ENCODE measurements at regions of chr1 and their contacts with region 1.

Region 1: GRCh38 chr1:23585447-23586015 is 26.2 kb upstream of the ID3 start:
- DNase-seq: no peak
- ATAC-seq: no peak
- H3K4me3 ChIP-seq: no peak overlapping the region
- H3K27ac ChIP-seq: no peak overlapping the region
- H3K4me1 ChIP-seq: 0 out of 2 replicates have a peak, but pooled peaks cover 2% of the 10 kb centered on the region
- H3K27me3 ChIP-seq: no peaks in the 10 kb centered on the region
- CTCF ChIP-seq: no peak

Region 2: DNA sequence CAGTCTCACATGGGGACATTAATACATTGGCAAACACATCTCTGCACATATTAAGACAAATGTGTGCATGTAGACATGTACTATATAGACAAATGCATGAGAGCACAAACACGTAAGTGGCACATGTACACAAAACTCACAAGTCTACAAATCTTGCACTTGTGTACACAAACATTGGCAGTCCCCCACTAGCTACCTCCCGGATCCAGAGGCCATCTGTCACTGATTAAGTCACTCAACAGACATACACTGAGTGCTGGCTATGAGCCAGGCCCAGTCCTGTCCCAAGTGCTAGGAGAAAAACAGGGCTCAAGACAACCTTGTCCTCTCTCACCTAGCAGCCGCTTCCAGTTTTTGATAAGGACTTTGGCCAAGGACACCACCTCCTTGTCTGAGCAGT is 168.0 kb before region 1 on chr1:
- CTCF ChIA-PET with region 1: no interaction called
- POLR2A ChIA-PET with region 1: no interaction called
- in situ Hi-C with region 1: no loop called
- intact Hi-C with region 1: no loop called
- DNase-seq: no peak
- ATAC-seq: no peak
- H3K4me3 ChIP-seq: no peak overlapping the region
- H3K27ac ChIP-seq: no peak overlapping the region
- H3K4me1 ChIP-seq: peaks cover 4% of the 10 kb centered on the region; the same call in 1 of the 2 replicates
- H3K27me3 ChIP-seq: no peaks in the 10 kb centered on the region
- CTCF ChIP-seq: no peak

Region 3: DNA sequence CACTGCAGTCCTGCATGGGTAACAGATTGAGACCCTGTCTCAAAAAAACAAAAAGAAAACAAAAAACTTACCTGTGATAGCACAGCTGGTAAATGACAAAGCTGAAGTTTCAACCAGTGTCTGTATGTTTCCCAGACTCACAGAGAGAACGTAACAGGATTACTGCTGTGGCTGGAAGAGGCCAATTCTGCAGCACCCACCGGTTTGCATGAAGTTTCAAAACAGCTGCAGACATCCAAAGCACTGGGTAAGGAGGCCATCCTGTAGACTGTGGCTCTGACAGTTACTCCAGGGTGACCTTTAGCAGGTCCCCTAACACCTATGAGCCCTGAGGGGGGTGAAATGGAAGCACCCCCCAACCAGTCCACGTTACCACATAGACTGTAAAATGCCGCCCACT is 33.7 kb before region 1 on chr1:
- CTCF ChIA-PET with region 1: no interaction called
- POLR2A ChIA-PET with region 1: no interaction called
- in situ Hi-C with region 1: no loop called
- intact Hi-C with region 1: no loop called
- DNase-seq: no peak
- ATAC-seq: no peak
- H3K4me3 ChIP-seq: no peak overlapping the region
- H3K27ac ChIP-seq: peak overlapping the region; percentile 25; the same call in 1 of the 2 replicates
- H3K4me1 ChIP-seq: peaks cover 28% of the 10 kb centered on the region
- H3K27me3 ChIP-seq: no peaks in the 10 kb centered on the region
- CTCF ChIP-seq: no peak

Region 4: GRCh38 chr1:23562137-23562876 is 23.2 kb before region 1 on chr1:
- CTCF ChIA-PET with region 1: interaction called, 10 read pairs
- POLR2A ChIA-PET with region 1: no interaction called
- in situ Hi-C with region 1: no loop called
- intact Hi-C with region 1: no loop called
- DNase-seq: no peak
- ATAC-seq: peak; percentile 84
- H3K4me3 ChIP-seq: peak overlapping the region; percentile 25 to 34
- H3K27ac ChIP-seq: peak overlapping the region; percentile 88
- H3K4me1 ChIP-seq: peaks cover 58% of the 10 kb centered on the region
- H3K27me3 ChIP-seq: no peaks in the 10 kb centered on the region
- CTCF ChIP-seq: no peak

Region 5: GRCh38 chr1:23643736-23644554 is 58.4 kb after region 1 on chr1:
- CTCF ChIA-PET with region 1: no interaction called
- POLR2A ChIA-PET with region 1: no interaction called
- in situ Hi-C with region 1: no loop called
- intact Hi-C with region 1: no loop called
- DNase-seq: no peak
- ATAC-seq: no peak
- H3K4me3 ChIP-seq: no peak overlapping the region
- H3K27ac ChIP-seq: no peak overlapping the region
- H3K4me1 ChIP-seq: no peaks in the 10 kb centered on the region
- H3K27me3 ChIP-seq: no peaks in the 10 kb centered on the region
- CTCF ChIP-seq: no peak

Measured in Panc1 (cell line).